ENCODE measurements at regions of chr2 and their contacts with region 1.

Region 1: DNA sequence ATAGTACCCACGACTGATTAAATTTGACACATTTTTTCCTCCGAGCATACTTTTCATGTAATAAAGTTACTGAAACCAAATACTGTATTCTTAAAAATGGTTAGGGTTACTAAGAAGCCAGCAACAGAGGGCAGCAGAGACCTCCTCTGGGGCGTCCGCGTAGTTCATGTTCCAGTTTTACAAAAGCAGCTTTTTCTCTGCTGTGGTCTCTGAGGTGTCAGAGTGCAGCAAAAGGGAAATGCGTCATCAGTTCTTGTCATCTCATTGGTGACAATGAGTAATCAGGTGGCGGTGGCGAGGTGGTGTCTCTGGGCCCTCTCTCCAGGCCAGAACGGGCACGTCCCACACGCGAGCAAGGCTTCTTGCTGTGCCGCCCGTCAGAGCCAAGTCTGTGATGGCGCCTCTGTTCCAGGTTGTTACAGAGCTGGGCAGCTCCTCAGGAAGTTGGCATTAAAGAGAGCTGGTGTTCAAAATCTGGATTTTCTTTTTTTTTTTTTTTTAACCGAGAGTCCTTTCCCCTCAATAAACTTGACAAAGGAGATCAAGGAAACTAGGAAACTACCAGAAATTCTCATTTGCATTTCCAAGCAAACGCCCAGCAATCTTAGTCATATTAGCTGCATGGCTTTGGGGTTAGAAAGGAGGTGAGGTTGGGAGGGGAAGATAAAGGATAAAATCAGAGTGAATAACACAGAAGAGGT is 98.6 kb upstream of the BZW1 start:
- DNase-seq: peak; percentile 72 to 96 (median 94)
- ATAC-seq: peak; percentile 98
- H3K4me3 ChIP-seq: peak overlapping the region; percentile 24
- H3K4me3 Mint-ChIP-seq: peak overlapping the region; percentile 75 to 88 (median 81)
- H3K27ac ChIP-seq: peak overlapping the region; percentile 82
- H3K27ac Mint-ChIP-seq: peak overlapping the region; percentile 97 to 100 (median 99)
- H3K4me1 ChIP-seq: peaks cover 5 to 8% of the 10 kb centered on the region in 2 donors
- H3K4me1 Mint-ChIP-seq: peaks cover 0 to 25% (median 12%) of the 10 kb centered on the region in 7 donors
- H3K27me3 ChIP-seq: no peaks in the 10 kb centered on the region
- H3K27me3 Mint-ChIP-seq: peaks cover 0 to 4% (median 0%) of the 10 kb centered on the region in 5 donors

Region 2: GRCh38 chr2:199911052-199911876 is 801.9 kb before region 1 on chr2 and contains the start of gene C2orf69:
- CTCF ChIA-PET with region 1: no interaction called
- POLR2A ChIA-PET with region 1: no interaction called
- intact Hi-C with region 1: loop called in 1 of 2 experiments (anchors 5 kb)
- DNase-seq: peak; percentile 80 to 92 (median 83)
- ATAC-seq: peak; percentile 93
- H3K4me3 ChIP-seq: peak within 1 kb of the TSS; percentile 75
- H3K4me3 Mint-ChIP-seq: peak within 1 kb of the TSS; percentile 89 to 100 (median 98)
- H3K27ac ChIP-seq: peak within 1 kb of the TSS; percentile 89
- H3K27ac Mint-ChIP-seq: peak within 1 kb of the TSS; percentile 72 to 95 (median 94)
- H3K4me1 ChIP-seq: peaks cover 11 to 19% of the 10 kb centered on the region in 2 donors
- H3K4me1 Mint-ChIP-seq: peaks cover 26 to 47% (median 37%) of the 10 kb centered on the region in 7 donors
- H3K27me3 ChIP-seq: no peaks in the 10 kb centered on the region
- H3K27me3 Mint-ChIP-seq: peaks cover 0 to 14% (median 8%) of the 10 kb centered on the region in 5 donors
- total RNA-seq, gene C2orf69: 10.1 to 15.4 (median 12.7) TPM

Region 3: GRCh38 chr2:200765139-200765951 is 52.2 kb after region 1 on chr2:
- CTCF ChIA-PET with region 1: no interaction called
- POLR2A ChIA-PET with region 1: no interaction called
- intact Hi-C with region 1: loop called in 1 of 2 experiments (anchors 5 kb)
- DNase-seq: peak in 1 of 9 donors; percentile 43
- ATAC-seq: peak; percentile 22
- H3K4me3 ChIP-seq: no peak overlapping the region
- H3K4me3 Mint-ChIP-seq: peak overlapping the region in 1 of 10 donors; percentile 38
- H3K27ac ChIP-seq: no peak overlapping the region
- H3K27ac Mint-ChIP-seq: peak overlapping the region in 1 of 9 donors; percentile 40
- H3K4me1 ChIP-seq: no peaks in the 10 kb centered on the region
- H3K4me1 Mint-ChIP-seq: peaks cover 0 to 28% (median 0%) of the 10 kb centered on the region in 7 donors
- H3K27me3 ChIP-seq: no peaks in the 10 kb centered on the region
- H3K27me3 Mint-ChIP-seq: no peaks in the 10 kb centered on the region

Region 4: DNA sequence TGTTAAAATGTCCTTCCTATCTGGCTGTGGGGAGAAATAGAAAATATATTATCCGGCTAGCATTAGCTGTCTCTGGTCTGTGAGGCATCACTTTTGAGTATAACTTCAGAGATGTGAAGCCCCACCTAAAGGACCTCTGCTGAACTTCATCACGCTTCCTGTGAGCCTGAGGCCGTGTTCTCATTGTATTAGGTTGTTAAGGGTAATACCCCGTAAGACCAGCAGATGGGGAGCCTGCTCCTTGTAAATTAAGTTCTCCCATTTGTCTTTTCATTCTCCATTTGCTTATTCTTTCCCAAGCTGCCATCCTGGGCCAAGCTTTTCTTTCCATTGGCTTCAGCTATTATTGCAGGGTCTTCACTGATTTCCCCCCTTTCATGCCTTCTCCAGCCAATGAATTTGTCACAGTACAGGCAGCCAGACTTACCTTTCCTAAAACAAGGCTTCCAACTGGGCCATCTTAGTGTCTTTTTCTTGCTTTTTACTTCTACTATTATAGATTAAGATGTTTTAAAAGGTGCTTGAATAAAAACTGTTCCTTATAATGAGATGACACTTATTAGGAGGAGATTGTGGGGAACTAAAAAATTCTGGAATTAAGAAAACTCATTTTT is 188.4 kb after region 1 on chr2:
- CTCF ChIA-PET with region 1: interaction called, 6 read pairs
- POLR2A ChIA-PET with region 1: no interaction called
- intact Hi-C with region 1: loop called (anchors 1 kb)
- DNase-seq: peak; percentile 18 to 83 (median 76)
- ATAC-seq: peak; percentile 100
- H3K4me3 ChIP-seq: no peak overlapping the region
- H3K4me3 Mint-ChIP-seq: no peak overlapping the region
- H3K27ac ChIP-seq: no peak overlapping the region
- H3K27ac Mint-ChIP-seq: peak overlapping the region; percentile 4 to 86 (median 44)
- H3K4me1 ChIP-seq: no peaks in the 10 kb centered on the region
- H3K4me1 Mint-ChIP-seq: peaks cover 0 to 27% (median 6%) of the 10 kb centered on the region in 7 donors
- H3K27me3 ChIP-seq: no peaks in the 10 kb centered on the region
- H3K27me3 Mint-ChIP-seq: no peaks in the 10 kb centered on the region

Region 5: DNA sequence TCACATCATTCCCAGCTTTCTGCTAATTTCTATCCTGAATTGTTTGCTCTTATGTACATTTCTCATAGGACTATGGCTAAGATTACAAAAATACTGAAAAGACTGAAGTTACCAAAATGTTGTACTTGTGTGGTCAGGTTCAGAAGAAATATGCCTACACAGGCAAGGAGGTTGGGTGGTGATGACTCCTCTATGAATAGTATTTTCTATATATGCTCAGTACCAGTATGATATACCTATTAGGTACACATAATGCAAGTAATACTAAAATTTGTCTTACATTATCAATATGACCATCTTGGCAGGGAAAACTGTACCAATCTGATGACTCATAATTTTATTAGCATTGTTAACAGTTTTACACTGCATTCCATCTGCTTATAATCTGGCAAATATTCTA is 262.5 kb after region 1 on chr2:
- CTCF ChIA-PET with region 1: no interaction called
- POLR2A ChIA-PET with region 1: no interaction called
- intact Hi-C with region 1: no loop called
- DNase-seq: no peak
- ATAC-seq: no peak
- H3K4me3 ChIP-seq: no peak overlapping the region
- H3K4me3 Mint-ChIP-seq: no peak overlapping the region
- H3K27ac ChIP-seq: no peak overlapping the region
- H3K27ac Mint-ChIP-seq: peak overlapping the region in 1 of 9 donors; percentile 39
- H3K4me1 ChIP-seq: no peaks in the 10 kb centered on the region
- H3K4me1 Mint-ChIP-seq: peaks cover 0 to 3% (median 0%) of the 10 kb centered on the region in 7 donors
- H3K27me3 ChIP-seq: no peaks in the 10 kb centered on the region
- H3K27me3 Mint-ChIP-seq: no peaks in the 10 kb centered on the region

Region 6: DNA sequence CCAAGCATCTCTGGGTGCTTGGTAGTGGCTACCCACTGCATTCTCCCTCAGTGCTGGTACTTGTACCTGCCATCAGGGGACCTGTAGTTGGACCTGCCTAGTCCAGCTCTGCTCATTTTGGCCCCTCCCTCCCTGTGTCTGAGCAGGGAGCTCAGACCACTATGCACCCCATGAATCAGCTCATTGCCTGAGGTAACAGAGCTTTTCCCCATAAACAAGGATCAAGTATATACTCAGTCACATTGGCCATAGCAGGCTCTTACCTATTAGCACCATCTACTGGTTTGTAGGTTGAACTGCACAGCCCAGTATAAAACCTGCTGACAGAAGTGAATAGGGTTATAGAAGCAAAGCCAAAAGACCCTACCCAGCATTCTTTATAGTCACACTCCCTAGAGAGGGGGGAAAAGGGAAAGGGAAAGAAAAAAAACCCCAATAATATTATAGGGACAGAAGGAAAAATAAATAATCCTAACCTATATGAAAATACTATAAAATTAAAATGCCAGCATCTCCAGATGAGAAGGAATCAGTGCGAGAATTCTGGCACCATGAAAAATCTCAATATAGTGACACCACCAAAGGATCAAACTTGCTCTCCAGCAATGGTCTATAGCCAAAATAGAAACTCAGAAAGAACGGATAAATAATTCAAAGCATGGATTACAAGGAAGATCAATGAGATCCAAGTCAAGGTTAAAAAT is 650.9 kb after region 1 on chr2:
- CTCF ChIA-PET with region 1: no interaction called
- POLR2A ChIA-PET with region 1: no interaction called
- intact Hi-C with region 1: loop called in 1 of 2 experiments (anchors 5 kb)
- DNase-seq: peak in 7 of 9 donors; percentile 21 to 64 (median 61)
- ATAC-seq: peak; percentile 96
- H3K4me3 ChIP-seq: no peak overlapping the region
- H3K4me3 Mint-ChIP-seq: peak overlapping the region in 5 of 10 donors; percentile 11 to 49 (median 32)
- H3K27ac ChIP-seq: no peak overlapping the region
- H3K27ac Mint-ChIP-seq: peak overlapping the region in 7 of 9 donors; percentile 9 to 84 (median 75)
- H3K4me1 ChIP-seq: peaks cover 0 to 24% of the 10 kb centered on the region in 2 donors
- H3K4me1 Mint-ChIP-seq: peaks cover 11 to 45% (median 41%) of the 10 kb centered on the region in 7 donors
- H3K27me3 ChIP-seq: no peaks in the 10 kb centered on the region
- H3K27me3 Mint-ChIP-seq: no peaks in the 10 kb centered on the region

Region 7: GRCh38 chr2:202033321-202034248 is 1320.4 kb after region 1 on chr2 and contains the start of gene FZD7:
- CTCF ChIA-PET with region 1: no interaction called
- POLR2A ChIA-PET with region 1: no interaction called
- intact Hi-C with region 1: loop called in 1 of 2 experiments (anchors 2 kb)
- DNase-seq: peak; percentile 70 to 87 (median 81)
- ATAC-seq: peak; percentile 92
- H3K4me3 ChIP-seq: peak within 1 kb of the TSS; percentile 91
- H3K4me3 Mint-ChIP-seq: peak within 1 kb of the TSS in 9 of 10 donors; percentile 87 to 96 (median 92)
- H3K27ac ChIP-seq: peak within 1 kb of the TSS; percentile 44
- H3K27ac Mint-ChIP-seq: peak within 1 kb of the TSS in 8 of 9 donors; percentile 46 to 83 (median 72)
- H3K4me1 ChIP-seq: peaks cover 9 to 11% of the 10 kb centered on the region in 2 donors
- H3K4me1 Mint-ChIP-seq: peaks cover 6 to 17% (median 14%) of the 10 kb centered on the region in 7 donors
- H3K27me3 ChIP-seq: peaks cover 6 to 22% of the 10 kb centered on the region in 2 donors
- H3K27me3 Mint-ChIP-seq: peaks cover 0 to 45% (median 7%) of the 10 kb centered on the region in 5 donors
- total RNA-seq, gene FZD7: 0.27 to 0.99 (median 0.43) TPM